ENCODE measurements at regions of chr17 and their contacts with region 1.

Region 1: GRCh38 chr17:47649153-47649971 is at the start of gene KPNB1:
- DNase-seq: peak; percentile 99
- ATAC-seq: peak; percentile 84
- H3K4me3 Mint-ChIP-seq: peak within 1 kb of the TSS; percentile 94
- H3K27ac Mint-ChIP-seq: peak within 1 kb of the TSS; percentile 99
- H3K4me1 Mint-ChIP-seq: peaks cover 46% of the 10 kb centered on the region
- H3K27me3 Mint-ChIP-seq: no peaks in the 10 kb centered on the region
- CTCF ChIP-seq: no peak
- total RNA-seq, gene KPNB1: 589 to 605 TPM

Region 2: DNA sequence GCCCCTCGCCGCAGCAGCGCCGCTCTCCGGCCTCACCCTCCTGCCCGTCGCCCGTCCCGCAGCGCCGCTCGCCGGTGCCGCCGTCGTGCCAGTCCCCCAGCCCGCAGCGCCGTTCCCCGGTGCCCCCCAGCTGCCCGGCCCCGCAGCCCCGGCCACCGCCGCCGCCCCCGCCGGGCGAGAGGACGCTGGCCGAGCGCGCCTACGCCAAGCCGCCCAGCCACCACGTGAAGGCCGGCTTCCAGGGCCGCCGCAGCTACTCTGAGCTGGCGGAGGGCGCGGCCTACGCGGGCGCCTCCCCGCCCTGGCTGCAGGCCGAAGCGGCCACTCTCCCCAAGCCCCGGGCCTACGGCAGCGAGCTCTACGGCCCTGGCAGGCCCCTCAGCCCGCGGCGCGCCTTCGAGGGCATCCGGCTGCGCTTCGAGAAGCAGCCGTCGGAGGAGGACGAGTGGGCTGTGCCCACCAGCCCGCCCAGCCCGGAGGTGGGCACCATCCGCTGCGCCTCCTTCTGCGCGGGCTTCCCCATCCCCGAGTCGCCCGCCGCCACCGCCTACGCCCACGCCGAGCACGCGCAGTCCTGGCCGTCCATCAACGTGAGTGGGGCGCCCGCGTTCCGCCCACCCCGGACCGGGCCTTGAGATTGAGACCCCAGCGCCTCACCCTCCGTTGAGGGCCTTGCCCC is 59.6 kb after region 1 on chr17:
- CTCF ChIA-PET with region 1: no interaction called
- POLR2A ChIA-PET with region 1: interaction called, 5 read pairs
- intact Hi-C with region 1: loop called (anchors 5 kb)
- DNase-seq: no peak
- ATAC-seq: no peak
- H3K4me3 Mint-ChIP-seq: no peak overlapping the region
- H3K27ac Mint-ChIP-seq: no peak overlapping the region
- H3K4me1 Mint-ChIP-seq: peaks cover 74% of the 10 kb centered on the region
- H3K27me3 Mint-ChIP-seq: no peaks in the 10 kb centered on the region
- CTCF ChIP-seq: no peak

Region 3: GRCh38 chr17:47733047-47733673 is 83.8 kb after region 1 on chr17 and contains the start of gene TBX21:
- CTCF ChIA-PET with region 1: no interaction called
- POLR2A ChIA-PET with region 1: interaction called, 18 read pairs
- intact Hi-C with region 1: no loop called
- DNase-seq: peak; percentile 97
- ATAC-seq: peak; percentile 88
- H3K4me3 Mint-ChIP-seq: peak within 1 kb of the TSS; percentile 91
- H3K27ac Mint-ChIP-seq: peak within 1 kb of the TSS; percentile 97
- H3K4me1 Mint-ChIP-seq: peaks cover 57% of the 10 kb centered on the region
- H3K27me3 Mint-ChIP-seq: no peaks in the 10 kb centered on the region
- CTCF ChIP-seq: peak; percentile 32
- total RNA-seq, gene TBX21: 53.0 to 56.9 TPM